ENCODE measurements at regions of chr2 and their contacts with region 1.

Region 1: GRCh38 chr2:3651691-3652648 is 6.0 kb upstream of the ALLC start:
- DNase-seq: peak; percentile 61
- H3K4me3 Mint-ChIP-seq: peak overlapping the region; percentile 57
- H3K27ac Mint-ChIP-seq: no peak overlapping the region
- H3K4me1 Mint-ChIP-seq: peaks cover 15% of the 10 kb centered on the region
- H3K27me3 Mint-ChIP-seq: peaks cover 49% of the 10 kb centered on the region
- CTCF ChIP-seq: no peak

Region 2: GRCh38 chr2:3160751-3161330 is 491.1 kb before region 1 on chr2:
- CTCF ChIA-PET with region 1: no interaction called
- intact Hi-C with region 1: no loop called
- DNase-seq: no peak
- H3K4me3 Mint-ChIP-seq: no peak overlapping the region
- H3K27ac Mint-ChIP-seq: no peak overlapping the region
- H3K4me1 Mint-ChIP-seq: no peaks in the 10 kb centered on the region
- H3K27me3 Mint-ChIP-seq: no peaks in the 10 kb centered on the region
- CTCF ChIP-seq: no peak

Region 3: DNA sequence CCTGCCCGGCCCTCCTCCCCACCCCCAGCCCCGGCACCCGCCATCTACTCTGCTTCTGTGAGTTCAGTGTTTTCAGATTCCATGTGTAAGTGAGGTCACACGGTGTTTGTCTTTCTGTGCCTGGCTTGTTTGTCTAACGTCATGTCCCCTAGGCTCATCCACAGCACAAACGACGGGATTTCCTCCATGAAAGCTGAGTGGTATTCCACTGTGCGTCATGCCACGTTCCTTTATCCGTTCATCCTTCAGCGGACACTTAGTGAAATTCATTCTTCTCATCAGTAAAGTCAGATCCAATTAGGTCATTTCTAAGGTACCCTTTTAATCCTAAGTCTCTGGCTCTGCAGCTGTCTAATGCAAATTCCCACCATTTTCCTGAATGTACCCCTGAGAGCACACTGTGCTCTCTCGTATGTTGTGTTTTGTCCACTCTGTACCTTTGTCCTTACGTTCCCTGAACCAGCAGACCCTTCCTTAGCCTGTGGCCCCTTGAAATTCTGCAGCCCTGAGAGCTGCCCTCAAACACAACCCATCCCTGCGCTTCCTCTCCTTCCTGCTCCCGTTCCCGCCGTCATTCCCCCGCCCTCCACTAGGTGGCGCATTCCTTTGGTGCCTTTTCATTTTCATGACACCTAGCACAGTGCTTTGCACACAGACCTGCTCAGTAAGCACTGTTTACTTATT is 228.3 kb before region 1 on chr2:
- CTCF ChIA-PET with region 1: no interaction called
- intact Hi-C with region 1: loop called (anchors 2 kb)
- DNase-seq: peak; percentile 83
- H3K4me3 Mint-ChIP-seq: no peak overlapping the region
- H3K27ac Mint-ChIP-seq: peak overlapping the region; percentile 27
- H3K4me1 Mint-ChIP-seq: peaks cover 8% of the 10 kb centered on the region
- H3K27me3 Mint-ChIP-seq: no peaks in the 10 kb centered on the region
- CTCF ChIP-seq: peak; percentile 93

Region 4: GRCh38 chr2:3433776-3434400 is 218.1 kb before region 1 on chr2:
- CTCF ChIA-PET with region 1: no interaction called
- intact Hi-C with region 1: no loop called
- DNase-seq: no peak
- H3K4me3 Mint-ChIP-seq: no peak overlapping the region
- H3K27ac Mint-ChIP-seq: no peak overlapping the region
- H3K4me1 Mint-ChIP-seq: no peaks in the 10 kb centered on the region
- H3K27me3 Mint-ChIP-seq: no peaks in the 10 kb centered on the region
- CTCF ChIP-seq: no peak

Region 5: DNA sequence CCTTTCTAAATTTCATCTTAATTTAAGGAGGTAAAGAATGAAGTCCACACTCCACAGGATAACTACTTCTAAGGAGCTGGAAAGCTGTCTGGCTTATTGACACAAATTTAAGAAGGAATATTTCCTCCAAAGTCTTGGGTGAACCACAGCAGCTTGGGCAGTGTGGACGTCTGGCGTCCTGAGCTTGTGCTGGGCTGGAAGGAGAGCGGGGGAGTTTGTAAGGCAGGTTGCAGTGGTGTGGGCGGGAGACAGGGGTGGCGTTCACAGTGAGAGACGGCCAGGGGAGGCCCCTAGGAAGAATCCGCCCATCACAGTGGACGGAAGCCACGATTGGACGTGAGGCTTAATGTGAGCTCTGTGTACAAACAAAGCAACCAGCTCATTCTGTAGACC is 158.4 kb before region 1 on chr2:
- CTCF ChIA-PET with region 1: no interaction called
- intact Hi-C with region 1: no loop called
- DNase-seq: no peak
- H3K4me3 Mint-ChIP-seq: no peak overlapping the region
- H3K27ac Mint-ChIP-seq: peak overlapping the region; percentile 17
- H3K4me1 Mint-ChIP-seq: no peaks in the 10 kb centered on the region
- H3K27me3 Mint-ChIP-seq: no peaks in the 10 kb centered on the region
- CTCF ChIP-seq: no peak

Region 6: DNA sequence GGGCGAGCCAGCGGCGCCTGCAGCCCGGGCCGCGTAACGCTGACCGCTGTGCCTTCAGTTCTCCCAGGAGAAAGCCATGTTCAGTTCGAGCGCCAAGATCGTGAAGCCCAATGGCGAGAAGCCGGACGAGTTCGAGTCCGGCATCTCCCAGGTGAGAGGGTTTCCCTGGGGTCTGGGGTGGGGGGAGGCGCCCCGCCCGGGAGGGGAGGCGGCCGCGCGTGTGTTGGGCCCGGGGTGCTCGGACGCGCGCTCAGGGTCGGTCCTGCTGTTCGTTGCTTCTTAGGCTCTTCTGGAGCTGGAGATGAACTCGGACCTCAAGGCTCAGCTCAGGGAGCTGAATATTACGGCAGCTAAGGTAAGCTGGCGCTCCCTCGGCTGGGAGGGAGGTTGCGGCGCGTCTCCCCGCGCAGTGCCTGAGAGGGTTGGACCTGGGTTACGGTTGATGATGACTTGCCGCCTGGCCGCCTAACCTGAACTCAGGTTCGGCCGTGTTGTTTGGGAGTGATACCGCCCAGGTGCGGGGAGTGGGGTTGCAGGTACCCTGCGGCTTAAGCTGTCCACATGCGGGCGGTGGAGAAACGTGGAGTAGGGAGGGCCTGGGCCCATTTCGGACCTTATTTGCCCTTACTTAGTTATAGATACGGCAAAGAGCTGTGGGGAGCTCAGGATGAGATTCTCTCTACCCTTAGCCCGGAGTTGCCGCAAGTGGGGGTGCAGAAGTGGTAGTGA is 76.3 kb before region 1 on chr2:
- CTCF ChIA-PET with region 1: no interaction called
- intact Hi-C with region 1: loop called (anchors 5 kb)
- DNase-seq: peak; percentile 6
- H3K4me3 Mint-ChIP-seq: peak overlapping the region; percentile 93
- H3K27ac Mint-ChIP-seq: peak overlapping the region; percentile 96
- H3K4me1 Mint-ChIP-seq: peaks cover 37% of the 10 kb centered on the region
- H3K27me3 Mint-ChIP-seq: no peaks in the 10 kb centered on the region
- CTCF ChIP-seq: no peak